Natural killer cell (primary cell): ENCODE measurements at regions of chr2 and their contacts with region 1.

Region 1: DNA sequence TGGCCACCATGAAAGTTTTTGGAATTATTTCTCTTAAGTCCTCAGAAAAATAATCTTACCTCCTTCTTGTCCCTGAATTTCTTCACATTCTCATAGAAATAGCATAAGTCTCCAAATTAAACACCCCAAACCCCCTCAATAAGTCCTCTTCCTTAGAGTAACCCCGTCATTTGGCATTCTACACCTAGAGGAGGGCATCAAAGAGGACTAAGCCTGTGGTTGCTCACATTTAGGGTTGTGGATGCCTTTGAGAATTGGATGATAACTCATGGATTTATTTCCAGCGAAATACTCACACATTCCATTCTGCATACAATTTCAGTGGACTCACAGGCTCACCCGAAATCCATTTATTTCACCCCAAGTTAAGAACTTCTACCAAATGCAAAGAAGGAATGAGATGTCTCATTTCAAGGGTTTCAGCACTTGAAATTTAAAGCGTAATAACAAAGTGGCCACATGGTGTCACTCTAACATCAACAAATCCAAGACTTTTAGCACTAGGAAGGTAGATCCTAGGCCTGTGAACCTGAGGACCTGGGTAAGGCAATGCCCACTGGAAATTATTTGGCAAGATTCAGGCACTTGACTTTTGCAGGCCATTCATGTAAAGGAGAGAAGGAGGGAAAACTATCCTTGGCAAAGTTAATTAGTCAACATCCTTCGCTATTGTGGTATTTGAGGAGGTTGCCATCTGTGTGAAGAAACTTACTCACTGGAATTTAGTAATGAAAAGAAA is 24.6 kb downstream of the DYTN start:
- DNase-seq: peak in 1 of 2 donors; percentile 77
- ATAC-seq: peak in 2 of 3 donors; percentile 52 to 63
- H3K4me3 ChIP-seq: no peak overlapping the region
- H3K4me3 Mint-ChIP-seq: no peak overlapping the region
- H3K27ac ChIP-seq: no peak overlapping the region
- H3K27ac Mint-ChIP-seq: no peak overlapping the region
- H3K4me1 ChIP-seq: no peaks in the 10 kb centered on the region
- H3K4me1 Mint-ChIP-seq: no peaks in the 10 kb centered on the region
- H3K27me3 ChIP-seq: no peaks in the 10 kb centered on the region
- H3K27me3 Mint-ChIP-seq: peaks cover 3 to 7% of the 10 kb centered on the region in 2 donors
- CTCF ChIP-seq: peak; percentile 62

Region 2: GRCh38 chr2:206683546-206683945 is 10.0 kb before region 1 on chr2:
- intact Hi-C with region 1: no loop called
- DNase-seq: no peak
- ATAC-seq: no peak
- H3K4me3 ChIP-seq: no peak overlapping the region
- H3K4me3 Mint-ChIP-seq: no peak overlapping the region
- H3K27ac ChIP-seq: no peak overlapping the region
- H3K27ac Mint-ChIP-seq: no peak overlapping the region
- H3K4me1 ChIP-seq: no peaks in the 10 kb centered on the region
- H3K4me1 Mint-ChIP-seq: no peaks in the 10 kb centered on the region
- H3K27me3 ChIP-seq: no peaks in the 10 kb centered on the region
- H3K27me3 Mint-ChIP-seq: peaks cover 8 to 10% of the 10 kb centered on the region in 2 donors
- CTCF ChIP-seq: no peak

Region 3: GRCh38 chr2:206780671-206781070 is 87.1 kb after region 1 on chr2:
- intact Hi-C with region 1: loop called (anchors 1 kb)
- DNase-seq: no peak
- ATAC-seq: no peak
- H3K4me3 ChIP-seq: no peak overlapping the region
- H3K4me3 Mint-ChIP-seq: no peak overlapping the region
- H3K27ac ChIP-seq: no peak overlapping the region
- H3K27ac Mint-ChIP-seq: no peak overlapping the region
- H3K4me1 ChIP-seq: no peaks in the 10 kb centered on the region
- H3K4me1 Mint-ChIP-seq: peaks cover 29 to 38% of the 10 kb centered on the region in 2 donors
- H3K27me3 ChIP-seq: no peaks in the 10 kb centered on the region
- H3K27me3 Mint-ChIP-seq: no peaks in the 10 kb centered on the region
- CTCF ChIP-seq: no peak

Region 4: DNA sequence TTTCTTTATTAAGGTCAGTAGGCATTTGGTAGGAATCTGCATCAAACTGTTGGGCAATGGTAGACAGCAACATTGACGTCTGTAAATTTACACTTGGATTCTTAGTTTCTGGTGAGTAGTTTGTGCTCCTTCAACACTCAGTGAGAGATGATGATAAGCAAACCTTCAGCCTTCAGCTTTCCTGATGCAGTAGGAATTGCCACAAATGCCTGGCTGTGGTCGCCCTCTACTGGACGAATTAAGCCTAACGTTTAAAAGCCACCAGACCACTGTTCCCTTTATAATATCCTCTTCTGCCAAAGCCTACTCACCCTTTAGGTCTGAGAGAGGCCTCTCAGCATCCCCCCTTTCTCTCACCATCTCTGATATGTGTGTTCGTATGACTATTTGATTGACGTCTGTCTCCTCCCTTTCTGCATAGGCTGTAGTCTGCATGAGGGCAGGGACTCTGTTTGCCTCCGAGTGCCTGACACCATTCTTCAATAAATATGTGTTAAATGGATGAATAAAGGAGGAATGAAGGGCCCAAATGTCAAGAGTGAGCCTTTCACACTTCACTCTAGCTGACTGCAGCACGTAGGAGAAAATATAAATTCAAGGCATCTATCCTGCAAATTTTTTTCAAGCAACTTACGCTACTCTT is 1378.8 kb after region 1 on chr2:
- intact Hi-C with region 1: loop called (anchors 5 kb)
- DNase-seq: peak; percentile 25 to 75
- ATAC-seq: peak; percentile 70 to 80 (median 78)
- H3K4me3 ChIP-seq: no peak overlapping the region
- H3K4me3 Mint-ChIP-seq: no peak overlapping the region
- H3K27ac ChIP-seq: no peak overlapping the region
- H3K27ac Mint-ChIP-seq: no peak overlapping the region
- H3K4me1 ChIP-seq: no peaks in the 10 kb centered on the region
- H3K4me1 Mint-ChIP-seq: no peaks in the 10 kb centered on the region
- H3K27me3 ChIP-seq: no peaks in the 10 kb centered on the region
- H3K27me3 Mint-ChIP-seq: peaks cover 0 to 7% of the 10 kb centered on the region in 2 donors
- CTCF ChIP-seq: peak; percentile 77